H1 (cell line): ENCODE measurements at regions of chr11 and their contacts with region 1.

Region 1: GRCh38 chr11:1765871-1766718 is 2.4 kb upstream of the CTSD start:
- DNase-seq: peak in 1 of 2 experiments; percentile 77
- H3K4me3 ChIP-seq: no peak overlapping the region
- H3K27ac ChIP-seq: no peak overlapping the region
- H3K4me1 ChIP-seq: peaks cover 0 to 6% (median 3%) of the 10 kb centered on the region in 4 experiments; a peak in 5 of 7 replicates
- H3K27me3 ChIP-seq: no peaks in the 10 kb centered on the region
- CTCF ChIP-seq: peak; percentile 44 to 85 (median 79)
- EP300 ChIP-seq: no peak
- POLR2A ChIP-seq: no peak
- RAD21 ChIP-seq: peak; percentile 32 to 44

Region 2: DNA sequence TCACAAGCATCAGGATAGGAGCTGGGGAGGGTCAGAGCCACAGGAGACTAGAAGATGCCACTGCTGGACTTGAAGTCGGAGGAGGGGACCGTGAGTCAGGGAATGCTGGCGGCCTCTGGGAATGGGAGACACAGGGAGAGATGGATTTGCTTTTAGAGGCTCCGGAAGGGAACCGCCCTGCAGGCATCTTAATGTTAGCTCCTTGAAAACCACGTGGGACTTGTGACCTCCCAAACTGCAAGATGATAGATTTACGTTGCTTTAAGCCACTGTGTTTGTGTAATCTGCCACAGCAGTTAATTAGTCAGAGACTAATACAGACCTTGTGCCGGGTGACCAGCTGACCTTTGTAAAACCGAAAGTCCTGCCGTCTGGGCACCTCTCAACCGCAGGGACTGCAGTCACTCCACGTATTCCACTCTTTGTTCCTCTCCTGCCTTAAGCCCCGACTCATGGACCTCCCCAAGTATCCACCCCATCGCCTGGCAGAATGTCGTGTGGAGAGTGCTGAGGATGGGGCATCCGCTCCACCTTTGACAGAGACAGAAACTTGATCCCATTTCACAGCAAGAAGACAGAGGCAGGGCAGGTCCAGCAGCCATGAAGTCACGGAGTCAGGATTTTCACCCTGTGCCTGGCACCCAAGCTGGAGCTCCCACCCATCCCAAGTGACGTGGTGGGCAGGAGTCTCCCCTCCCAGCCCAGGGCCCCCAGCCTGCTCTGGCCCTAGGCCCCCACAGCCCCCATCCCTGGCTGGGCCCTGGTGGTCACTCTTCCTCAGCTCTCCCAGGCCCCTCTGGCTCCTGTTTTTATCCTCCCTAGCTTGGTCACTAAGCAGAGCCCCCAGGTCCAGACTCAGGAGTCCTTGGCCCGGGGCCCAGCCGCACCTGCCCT is 17.0 kb after region 1 on chr11:
- CTCF ChIA-PET with region 1: interaction called, 11 read pairs
- POLR2A ChIA-PET with region 1: no interaction called
- DNase-seq: no peak
- H3K4me3 ChIP-seq: no peak overlapping the region
- H3K27ac ChIP-seq: no peak overlapping the region
- H3K4me1 ChIP-seq: peaks cover 2 to 15% (median 4%) of the 10 kb centered on the region in 4 experiments; a peak in 6 of 7 replicates
- H3K27me3 ChIP-seq: peaks cover 0 to 3% (median 0%) of the 10 kb centered on the region in 4 experiments; a peak in 3 of 7 replicates
- CTCF ChIP-seq: no peak
- EP300 ChIP-seq: no peak
- POLR2A ChIP-seq: no peak
- RAD21 ChIP-seq: no peak